Endothelial cell of umbilical vein (primary cell): ENCODE measurements at regions of chr18 and their contacts with region 1.

Region 1: DNA sequence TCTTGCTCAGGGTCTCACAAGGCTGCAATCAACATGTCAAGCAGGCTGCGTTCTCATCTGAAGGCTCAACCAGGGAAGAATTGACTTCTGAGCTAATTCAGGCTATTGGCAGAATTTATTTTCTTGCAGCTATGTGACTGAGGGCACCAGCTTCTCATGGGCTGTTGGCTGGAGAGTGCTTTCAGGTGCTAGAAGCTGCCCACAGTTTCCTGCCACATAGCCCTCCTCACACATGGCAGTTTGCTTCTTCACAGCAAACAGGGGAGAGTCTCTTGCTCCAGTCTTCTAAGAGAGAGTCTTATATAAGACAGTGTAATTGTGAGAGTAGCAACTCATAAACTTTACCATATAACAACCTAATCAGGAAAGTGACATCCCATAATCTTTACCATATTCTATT is 37.5 kb upstream of the INO80C start:
- DNase-seq: no peak
- H3K4me3 ChIP-seq: no peak overlapping the region
- H3K27ac ChIP-seq: no peak overlapping the region
- H3K4me1 ChIP-seq: no peaks in the 10 kb centered on the region
- H3K27me3 ChIP-seq: no peaks in the 10 kb centered on the region
- CTCF ChIP-seq: no peak
- POLR2A ChIP-seq: no peak

Region 2: DNA sequence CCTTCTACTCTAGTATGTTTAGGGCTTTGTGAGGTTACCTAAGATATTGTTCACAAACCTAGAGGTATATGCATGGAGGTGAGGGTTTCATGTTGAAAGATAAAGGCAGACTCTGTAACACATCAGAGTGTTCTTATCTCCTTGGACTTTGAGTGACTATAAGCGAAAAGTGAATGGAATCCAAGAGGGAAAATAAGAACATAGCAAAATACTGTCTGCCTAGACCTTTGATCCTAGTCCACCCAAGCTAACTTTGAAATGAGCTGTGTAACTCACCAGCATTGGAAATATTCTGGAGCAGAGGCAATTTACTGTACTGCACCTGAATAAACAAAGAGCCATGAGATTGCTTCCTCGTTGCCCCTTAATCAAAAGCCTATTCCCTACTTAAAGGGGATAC is 18.0 kb after region 1 on chr18:
- CTCF ChIA-PET with region 1: no interaction called
- POLR2A ChIA-PET with region 1: no interaction called
- dilution Hi-C with region 1: no loop called
- intact Hi-C with region 1: loop called (anchors 2 kb)
- DNase-seq: no peak
- H3K4me3 ChIP-seq: no peak overlapping the region
- H3K27ac ChIP-seq: no peak overlapping the region
- H3K4me1 ChIP-seq: no peaks in the 10 kb centered on the region
- H3K27me3 ChIP-seq: no peaks in the 10 kb centered on the region
- CTCF ChIP-seq: no peak
- POLR2A ChIP-seq: no peak

Region 3: DNA sequence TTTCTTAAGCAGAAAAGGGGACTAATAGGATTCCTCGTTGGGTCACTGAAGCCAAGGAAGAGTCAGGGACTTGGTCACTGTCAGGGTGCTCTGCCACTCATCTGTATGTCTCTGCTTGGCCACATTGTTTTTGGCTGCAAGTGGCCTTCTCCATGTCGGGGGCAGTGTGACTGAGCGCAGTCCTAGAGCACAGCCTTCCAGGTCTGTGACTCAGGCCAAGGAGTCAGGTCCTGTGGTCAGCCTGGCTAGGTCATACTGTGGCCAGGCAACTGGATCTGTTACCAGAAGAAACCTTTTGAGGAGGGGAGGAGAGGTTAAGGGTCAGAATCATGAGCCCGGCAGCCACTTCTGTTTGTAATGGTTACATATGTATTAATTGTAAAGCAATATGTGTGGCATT is 107.5 kb after region 1 on chr18:
- CTCF ChIA-PET with region 1: no interaction called
- POLR2A ChIA-PET with region 1: no interaction called
- dilution Hi-C with region 1: no loop called
- intact Hi-C with region 1: no loop called
- DNase-seq: no peak
- H3K4me3 ChIP-seq: no peak overlapping the region
- H3K27ac ChIP-seq: no peak overlapping the region
- H3K4me1 ChIP-seq: no peaks in the 10 kb centered on the region
- H3K27me3 ChIP-seq: no peaks in the 10 kb centered on the region
- CTCF ChIP-seq: no peak
- POLR2A ChIP-seq: no peak